PC-9 (cell line): ENCODE measurements at regions of chr22 and their contacts with region 1.

Region 1: DNA sequence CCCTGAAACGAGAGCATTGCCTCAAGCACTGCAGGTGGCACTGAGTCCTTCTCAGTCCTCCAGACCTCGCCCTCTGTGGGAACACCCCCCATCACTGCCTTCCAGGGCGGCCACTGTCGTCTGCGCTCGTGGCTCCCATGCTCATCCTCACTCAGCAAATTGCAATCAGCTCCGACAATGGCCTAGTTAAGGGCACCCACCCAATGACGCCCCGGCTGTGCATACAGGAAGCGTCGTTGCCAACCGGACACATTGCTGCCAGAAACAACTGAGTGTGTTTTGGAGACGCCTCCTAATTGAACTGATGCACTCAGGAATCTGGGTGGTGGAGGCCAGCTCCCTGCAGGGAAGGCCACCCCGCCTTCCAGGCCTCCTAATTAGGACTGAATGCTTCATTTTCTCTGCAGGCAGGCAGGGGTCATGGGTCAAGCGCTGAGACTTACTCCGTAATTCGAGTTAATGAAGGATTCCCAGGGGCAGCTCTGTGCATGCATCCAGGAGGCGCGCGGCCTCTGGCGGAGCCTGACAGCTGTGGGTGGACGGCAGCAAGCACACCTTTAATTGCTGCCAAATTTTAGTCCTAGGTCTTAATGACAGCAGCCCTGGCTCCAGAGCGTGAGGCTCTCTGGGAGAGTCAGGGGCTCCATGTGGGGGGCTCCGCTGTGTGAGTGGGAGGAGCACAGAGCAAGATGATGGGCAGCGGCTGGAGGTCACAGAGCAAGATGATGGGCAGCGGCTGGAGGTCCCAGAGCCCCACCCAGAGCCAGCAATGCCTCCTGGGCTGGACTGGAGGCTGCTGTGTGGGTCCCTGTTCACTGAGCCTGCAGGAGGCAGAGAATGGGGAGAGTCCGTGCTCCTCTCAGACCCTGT is 199.0 kb downstream of the BRD1 start:
- DNase-seq: no peak
- H3K4me3 ChIP-seq: no peak overlapping the region
- H3K27ac ChIP-seq: no peak overlapping the region
- H3K4me1 ChIP-seq: no peaks in the 10 kb centered on the region
- H3K27me3 ChIP-seq: peaks cover 92% of the 10 kb centered on the region
- CTCF ChIP-seq: no peak

Region 2: GRCh38 chr22:49434101-49434611 is 194.5 kb before region 1 on chr22:
- CTCF ChIA-PET with region 1: interaction called, 6 read pairs
- POLR2A ChIA-PET with region 1: no interaction called
- intact Hi-C with region 1: loop called (anchors 5 kb)
- DNase-seq: peak in 1 of 2 experiments; percentile 39
- H3K4me3 ChIP-seq: no peak overlapping the region
- H3K27ac ChIP-seq: no peak overlapping the region
- H3K4me1 ChIP-seq: no peaks in the 10 kb centered on the region
- H3K27me3 ChIP-seq: peaks cover 95% of the 10 kb centered on the region
- CTCF ChIP-seq: peak; percentile 75

Region 3: GRCh38 chr22:49970528-49971231 is 342.1 kb after region 1 on chr22:
- CTCF ChIA-PET with region 1: no interaction called
- POLR2A ChIA-PET with region 1: no interaction called
- intact Hi-C with region 1: no loop called
- DNase-seq: peak; percentile 97 to 99
- H3K4me3 ChIP-seq: peak overlapping the region; percentile 56
- H3K27ac ChIP-seq: peak overlapping the region; percentile 67
- H3K4me1 ChIP-seq: peaks cover 13% of the 10 kb centered on the region
- H3K27me3 ChIP-seq: no peaks in the 10 kb centered on the region
- CTCF ChIP-seq: no peak

Region 4: DNA sequence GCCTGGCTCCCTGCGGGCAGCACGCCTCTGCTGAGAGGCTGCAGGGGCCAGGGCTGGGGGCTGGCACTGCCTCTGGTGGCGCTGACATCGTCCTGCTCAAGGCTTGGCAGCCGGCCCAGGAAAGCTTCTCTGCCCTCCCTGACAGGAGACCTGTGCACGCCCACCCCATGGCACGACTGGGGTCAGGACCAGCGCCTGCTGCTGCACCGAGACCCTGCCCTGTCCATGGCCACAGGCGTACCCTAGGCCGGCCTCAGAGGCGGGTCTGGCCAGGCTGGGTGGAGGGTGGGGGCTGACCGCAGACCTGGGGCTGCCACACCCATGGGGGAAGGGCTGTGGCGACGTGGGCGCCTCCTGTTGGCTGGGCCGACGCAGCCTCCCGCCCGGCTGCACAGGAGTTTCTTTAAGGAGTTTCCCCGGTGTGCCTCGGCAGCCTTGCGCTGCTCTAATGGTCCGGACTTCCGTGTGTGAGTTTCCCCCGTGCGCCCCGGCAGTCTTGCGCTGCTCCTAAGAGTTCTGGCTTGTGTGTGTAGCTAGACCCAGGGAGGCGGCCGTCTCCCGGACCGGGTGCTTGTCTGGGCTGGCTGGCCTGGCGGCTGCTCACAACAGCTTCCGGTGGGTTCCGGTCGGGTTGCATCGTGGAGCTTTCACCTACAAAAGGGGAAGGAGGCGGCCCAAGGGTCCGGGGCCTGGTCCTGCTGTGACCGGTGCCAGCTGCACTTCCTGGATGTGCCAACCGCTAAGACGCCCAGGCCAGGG is 561.7 kb after region 1 on chr22:
- CTCF ChIA-PET with region 1: no interaction called
- POLR2A ChIA-PET with region 1: no interaction called
- intact Hi-C with region 1: no loop called
- DNase-seq: peak; percentile 81 to 89
- H3K4me3 ChIP-seq: peak overlapping the region; percentile 49; the same call in 1 of the 2 replicates
- H3K27ac ChIP-seq: peak overlapping the region; percentile 67
- H3K4me1 ChIP-seq: peaks cover 35% of the 10 kb centered on the region
- H3K27me3 ChIP-seq: no peaks in the 10 kb centered on the region
- CTCF ChIP-seq: peak; percentile 54; the same call in 1 of the 2 replicates